GM12878 (cell line): ENCODE measurements at regions of chr2 and their contacts with region 1.

Region 1: GRCh38 chr2:218659258-218659987 is at the starts of genes BCS1L and ZNF142:
- DNase-seq: peak; percentile 71
- ATAC-seq: peak; percentile 97
- H3K4me3 ChIP-seq: peak within 1 kb of the TSS; percentile 96
- H3K27ac ChIP-seq: peak within 1 kb of the TSS; percentile 73
- H3K4me1 ChIP-seq: peaks cover 18% of the 10 kb centered on the region
- H3K27me3 ChIP-seq: no peaks in the 10 kb centered on the region
- CTCF ChIP-seq: no peak
- EP300 ChIP-seq: peak in 1 of 2 experiments; percentile 31; a peak in 1 of 4 replicates
- POLR2A ChIP-seq: peak; percentile 91
- RAD21 ChIP-seq: no peak
- polyA plus RNA-seq, gene BCS1L: 77.1 to 77.8 TPM
- polyA plus RNA-seq, gene ZNF142: 1.3 to 2.4 TPM

Region 2: GRCh38 chr2:218292048-218293014 is 367.1 kb before region 1 on chr2 and contains the start of gene TMBIM1:
- CTCF ChIA-PET with region 1: interaction called, 4 read pairs
- POLR2A ChIA-PET with region 1: no interaction called
- RAD21 ChIA-PET with region 1: interaction called, 5 read pairs
- SMC1A ChIA-PET with region 1: no interaction called
- in situ Hi-C with region 1: no loop called
- intact Hi-C with region 1: loop called (anchors 10 kb)
- DNase-seq: no peak
- ATAC-seq: peak; percentile 87
- H3K4me3 ChIP-seq: peak within 1 kb of the TSS; percentile 85
- H3K27ac ChIP-seq: peak within 1 kb of the TSS; percentile 72
- H3K4me1 ChIP-seq: peaks cover 28% of the 10 kb centered on the region
- H3K27me3 ChIP-seq: no peaks in the 10 kb centered on the region
- CTCF ChIP-seq: peak; percentile 68 to 92 (median 85)
- EP300 ChIP-seq: no peak
- POLR2A ChIP-seq: peak; percentile 58
- RAD21 ChIP-seq: peak; percentile 51
- polyA plus RNA-seq, gene TMBIM1: 6.1 to 11.7 TPM

Region 3: GRCh38 chr2:218648088-218648786 is 11.2 kb before region 1 on chr2:
- CTCF ChIA-PET with region 1: interaction called, 25 read pairs
- POLR2A ChIA-PET with region 1: interaction called, 4 read pairs
- RAD21 ChIA-PET with region 1: interaction called, 5 read pairs
- SMC1A ChIA-PET with region 1: interaction called, 20 read pairs
- in situ Hi-C with region 1: no loop called
- intact Hi-C with region 1: no loop called
- DNase-seq: no peak
- ATAC-seq: peak; percentile 96
- H3K4me3 ChIP-seq: no peak overlapping the region
- H3K27ac ChIP-seq: no peak overlapping the region
- H3K4me1 ChIP-seq: no peaks in the 10 kb centered on the region
- H3K27me3 ChIP-seq: no peaks in the 10 kb centered on the region
- CTCF ChIP-seq: peak; percentile 83 to 97 (median 91)
- EP300 ChIP-seq: no peak
- POLR2A ChIP-seq: no peak
- RAD21 ChIP-seq: peak; percentile 80

Region 4: GRCh38 chr2:218671654-218672566 is 12.5 kb after region 1 on chr2 and contains the starts of genes RNF25 and STK36:
- CTCF ChIA-PET with region 1: interaction called, 48 read pairs
- POLR2A ChIA-PET with region 1: interaction called, 22 read pairs
- RAD21 ChIA-PET with region 1: interaction called, 22 read pairs
- SMC1A ChIA-PET with region 1: interaction called, 22 read pairs
- in situ Hi-C with region 1: no loop called
- intact Hi-C with region 1: loop called (anchors 1 kb)
- DNase-seq: peak; percentile 42
- ATAC-seq: peak; percentile 99
- H3K4me3 ChIP-seq: peak within 1 kb of the TSS; percentile 98
- H3K27ac ChIP-seq: peak within 1 kb of the TSS; percentile 82
- H3K4me1 ChIP-seq: 0 out of 2 replicates have a peak, but pooled peaks cover 6% of the 10 kb centered on the region
- H3K27me3 ChIP-seq: no peaks in the 10 kb centered on the region
- CTCF ChIP-seq: no peak
- EP300 ChIP-seq: no peak
- POLR2A ChIP-seq: peak; percentile 88
- RAD21 ChIP-seq: no peak
- polyA plus RNA-seq, gene RNF25: 1.3 to 6.9 TPM
- polyA plus RNA-seq, gene STK36: 4.0 to 7.3 TPM

Region 5: GRCh38 chr2:218691234-218691633 is 31.8 kb after region 1 on chr2:
- CTCF ChIA-PET with region 1: interaction called, 14 read pairs
- POLR2A ChIA-PET with region 1: no interaction called
- RAD21 ChIA-PET with region 1: interaction called, 7 read pairs
- SMC1A ChIA-PET with region 1: interaction called, 10 read pairs
- in situ Hi-C with region 1: no loop called
- intact Hi-C with region 1: no loop called
- DNase-seq: no peak
- ATAC-seq: no peak
- H3K4me3 ChIP-seq: no peak overlapping the region
- H3K27ac ChIP-seq: no peak overlapping the region
- H3K4me1 ChIP-seq: no peaks in the 10 kb centered on the region
- H3K27me3 ChIP-seq: no peaks in the 10 kb centered on the region
- CTCF ChIP-seq: no peak
- EP300 ChIP-seq: no peak
- POLR2A ChIP-seq: no peak
- RAD21 ChIP-seq: no peak

Region 6: GRCh38 chr2:218710687-218711549 is 51.5 kb after region 1 on chr2 and contains the start of gene TTLL4:
- CTCF ChIA-PET with region 1: interaction called, 36 read pairs
- POLR2A ChIA-PET with region 1: interaction called, 5 read pairs
- RAD21 ChIA-PET with region 1: interaction called, 12 read pairs
- SMC1A ChIA-PET with region 1: interaction called, 15 read pairs
- in situ Hi-C with region 1: no loop called
- intact Hi-C with region 1: loop called (anchors 1 kb)
- DNase-seq: peak; percentile 88
- ATAC-seq: peak; percentile 94
- H3K4me3 ChIP-seq: peak within 1 kb of the TSS; percentile 89
- H3K27ac ChIP-seq: peak within 1 kb of the TSS; percentile 77
- H3K4me1 ChIP-seq: peaks cover 7% of the 10 kb centered on the region
- H3K27me3 ChIP-seq: no peaks in the 10 kb centered on the region
- CTCF ChIP-seq: peak; percentile 81 to 95 (median 87)
- EP300 ChIP-seq: no peak
- POLR2A ChIP-seq: peak; percentile 78
- RAD21 ChIP-seq: peak; percentile 81
- polyA plus RNA-seq, gene TTLL4: 16.6 to 18.7 TPM

Region 7: GRCh38 chr2:218898109-218898878 is 238.9 kb after region 1 on chr2:
- CTCF ChIA-PET with region 1: interaction called, 14 read pairs
- POLR2A ChIA-PET with region 1: interaction called, 3 read pairs
- RAD21 ChIA-PET with region 1: interaction called, 4 read pairs
- SMC1A ChIA-PET with region 1: interaction called, 10 read pairs
- in situ Hi-C with region 1: no loop called
- intact Hi-C with region 1: no loop called
- DNase-seq: no peak
- ATAC-seq: peak; percentile 54
- H3K4me3 ChIP-seq: peak overlapping the region; percentile 67; the same call in 1 of the 2 replicates
- H3K27ac ChIP-seq: peak overlapping the region; percentile 95; the same call in 1 of the 2 replicates
- H3K4me1 ChIP-seq: peaks cover 40% of the 10 kb centered on the region
- H3K27me3 ChIP-seq: no peaks in the 10 kb centered on the region
- CTCF ChIP-seq: peak; percentile 93 to 98 (median 98)
- EP300 ChIP-seq: no peak
- POLR2A ChIP-seq: no peak; the same call in 1 of the 2 replicates
- RAD21 ChIP-seq: peak; percentile 94